ENCODE measurements at regions of chr21 and their contacts with region 1.

Region 1: GRCh38 chr21:41943851-41944250 is 10.0 kb downstream of the C2CD2 start:
- DNase-seq: no peak
- H3K4me3 ChIP-seq: no peak overlapping the region
- H3K27ac ChIP-seq: no peak overlapping the region
- H3K4me1 ChIP-seq: no peaks in the 10 kb centered on the region
- H3K27me3 ChIP-seq: no peaks in the 10 kb centered on the region
- CTCF ChIP-seq: no peak

Region 2: GRCh38 chr21:41973861-41974751 is 30.3 kb after region 1 on chr21:
- CTCF ChIA-PET with region 1: no interaction called
- POLR2A ChIA-PET with region 1: no interaction called
- intact Hi-C with region 1: no loop called
- DNase-seq: no peak
- H3K4me3 ChIP-seq: no peak overlapping the region
- H3K27ac ChIP-seq: no peak overlapping the region
- H3K4me1 ChIP-seq: no peaks in the 10 kb centered on the region
- H3K27me3 ChIP-seq: no peaks in the 10 kb centered on the region
- CTCF ChIP-seq: no peak

Region 3: DNA sequence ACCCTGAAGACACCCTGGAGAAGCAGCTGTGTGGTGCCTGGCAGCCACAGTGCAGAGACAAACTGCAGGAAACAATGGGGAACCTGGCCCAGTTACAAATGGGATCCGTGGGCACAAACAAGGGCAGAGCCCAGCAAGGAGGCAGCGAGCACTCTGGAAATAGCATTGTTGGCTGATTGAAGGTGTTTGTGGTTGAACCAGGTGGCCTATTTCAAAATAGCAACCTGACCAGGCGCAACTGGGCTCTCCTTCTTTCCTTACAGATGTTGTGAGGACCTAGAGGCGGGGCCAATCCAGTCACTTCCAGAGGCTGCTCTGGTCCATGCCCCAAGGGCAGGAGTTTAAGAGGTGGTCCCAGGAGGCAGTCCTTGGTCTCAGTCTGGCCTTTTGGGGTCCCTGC is 88.0 kb after region 1 on chr21:
- CTCF ChIA-PET with region 1: no interaction called
- POLR2A ChIA-PET with region 1: interaction called, 11 read pairs
- intact Hi-C with region 1: no loop called
- DNase-seq: no peak
- H3K4me3 ChIP-seq: no peak overlapping the region
- H3K27ac ChIP-seq: no peak overlapping the region
- H3K4me1 ChIP-seq: no peaks in the 10 kb centered on the region
- H3K27me3 ChIP-seq: no peaks in the 10 kb centered on the region
- CTCF ChIP-seq: no peak